ENCODE measurements at regions of chr7 and their contacts with region 1.

Region 1: DNA sequence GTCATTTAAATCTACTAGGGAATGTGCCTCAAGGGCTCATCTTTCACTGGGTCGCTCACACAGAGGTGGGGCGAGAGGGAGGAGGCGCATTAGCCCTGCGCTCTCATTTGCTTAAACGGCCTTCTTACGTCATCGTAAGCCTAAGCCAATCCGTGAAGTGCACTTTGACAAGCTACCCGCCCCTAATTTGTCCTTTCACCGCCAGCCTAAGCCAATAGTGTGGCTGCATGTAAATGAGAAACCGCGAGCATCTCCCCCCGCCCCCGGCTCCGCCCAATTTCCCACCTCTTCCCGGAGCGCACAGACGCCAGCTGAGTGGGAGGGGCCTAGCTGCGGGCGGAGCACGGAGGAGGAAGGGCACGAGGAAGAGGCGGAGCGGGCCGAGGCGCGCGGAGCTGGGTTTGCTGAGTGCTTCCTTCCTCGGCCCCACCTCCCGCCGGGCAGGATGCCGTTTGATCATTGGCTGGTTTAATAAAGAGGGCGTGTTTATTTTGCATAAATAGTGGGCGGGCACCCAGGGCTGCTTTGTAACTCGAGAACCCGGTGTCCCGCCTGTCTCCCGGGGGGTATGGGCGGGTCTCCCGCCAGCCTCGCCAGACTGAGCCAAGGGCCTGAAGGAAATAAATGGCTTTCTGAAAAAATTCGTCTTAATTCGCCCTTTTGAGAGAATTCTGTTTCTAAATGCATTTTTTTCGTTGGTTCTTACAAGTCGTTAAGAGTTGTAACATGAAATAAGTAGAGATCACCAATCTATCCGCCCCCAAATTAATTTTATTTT is 289.5 kb upstream of the NFE2L3 start:
- DNase-seq: peak; percentile 32 to 95 (median 49)
- ATAC-seq: peak; percentile 93
- H3K4me3 ChIP-seq: peak overlapping the region; percentile 4
- H3K4me3 Mint-ChIP-seq: peak overlapping the region in 8 of 10 donors; percentile 38 to 87 (median 61)
- H3K27ac ChIP-seq: no peak overlapping the region
- H3K27ac Mint-ChIP-seq: peak overlapping the region in 8 of 9 donors; percentile 14 to 88 (median 84)
- H3K4me1 ChIP-seq: peaks cover 0 to 6% of the 10 kb centered on the region in 2 donors
- H3K4me1 Mint-ChIP-seq: peaks cover 8 to 46% (median 20%) of the 10 kb centered on the region in 7 donors
- H3K27me3 ChIP-seq: peaks cover 35 to 87% of the 10 kb centered on the region in 2 donors
- H3K27me3 Mint-ChIP-seq: peaks cover 23 to 82% (median 62%) of the 10 kb centered on the region in 5 donors

Region 2: GRCh38 chr7:24836084-24836483 is 1026.4 kb before region 1 on chr7:
- CTCF ChIA-PET with region 1: no interaction called
- POLR2A ChIA-PET with region 1: no interaction called
- intact Hi-C with region 1: no loop called
- DNase-seq: peak in 1 of 9 donors; percentile 4
- ATAC-seq: peak; percentile 59
- H3K4me3 ChIP-seq: no peak overlapping the region
- H3K4me3 Mint-ChIP-seq: peak overlapping the region in 4 of 10 donors; percentile 4 to 62 (median 24)
- H3K27ac ChIP-seq: no peak overlapping the region
- H3K27ac Mint-ChIP-seq: peak overlapping the region in 3 of 9 donors; percentile 16 to 58 (median 41)
- H3K4me1 ChIP-seq: peaks cover 4 to 19% of the 10 kb centered on the region in 2 donors
- H3K4me1 Mint-ChIP-seq: peaks cover 14 to 56% (median 21%) of the 10 kb centered on the region in 7 donors
- H3K27me3 ChIP-seq: no peaks in the 10 kb centered on the region
- H3K27me3 Mint-ChIP-seq: no peaks in the 10 kb centered on the region

Region 3: DNA sequence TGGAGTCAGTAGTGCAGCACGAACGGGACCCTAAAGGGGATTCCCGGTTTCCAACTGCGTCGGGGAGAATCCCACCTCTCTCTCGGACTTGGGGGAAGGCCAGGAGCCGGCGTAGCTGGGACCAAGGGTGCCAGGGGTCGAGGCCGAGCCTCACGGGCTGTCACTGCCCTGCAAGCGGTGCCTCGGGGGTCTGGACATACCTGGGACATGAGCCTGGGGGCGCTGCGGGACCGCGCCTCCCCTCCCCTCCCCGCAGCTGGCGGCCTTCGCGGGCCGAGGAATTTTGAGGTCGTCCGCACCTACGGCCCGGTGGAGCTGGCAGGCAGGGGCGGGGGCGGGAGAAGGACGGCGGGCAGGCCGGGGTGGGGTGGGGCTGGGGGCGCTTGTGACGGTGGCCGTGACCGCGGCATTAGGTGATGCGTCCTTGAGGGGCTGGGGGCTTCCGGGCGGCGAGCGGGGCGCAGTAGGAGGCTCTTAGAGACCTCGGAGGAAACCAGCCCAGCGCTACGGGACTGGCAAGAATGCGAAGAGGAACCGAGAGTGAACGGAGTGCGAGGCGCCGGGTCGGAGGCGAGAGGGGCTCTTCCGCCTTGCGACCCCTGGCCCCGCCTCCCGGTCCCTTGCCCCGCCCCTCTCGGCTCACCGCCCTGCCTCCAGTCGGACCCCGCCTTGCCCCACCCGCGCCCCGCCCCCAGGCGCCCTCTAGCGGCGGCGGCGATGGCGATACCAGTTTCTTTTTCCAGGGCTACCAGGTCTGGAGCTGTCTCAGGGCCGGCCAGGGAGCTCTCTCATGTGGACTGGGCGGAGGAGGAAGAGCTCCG is 682.5 kb before region 1 on chr7:
- CTCF ChIA-PET with region 1: no interaction called
- POLR2A ChIA-PET with region 1: no interaction called
- intact Hi-C with region 1: loop called in 1 of 2 experiments (anchors 5 kb)
- DNase-seq: peak; percentile 88 to 99 (median 94)
- ATAC-seq: peak; percentile 99
- H3K4me3 ChIP-seq: peak overlapping the region; percentile 75
- H3K4me3 Mint-ChIP-seq: peak overlapping the region; percentile 82 to 93 (median 88)
- H3K27ac ChIP-seq: peak overlapping the region; percentile 86
- H3K27ac Mint-ChIP-seq: peak overlapping the region; percentile 83 to 96 (median 92)
- H3K4me1 ChIP-seq: peaks cover 6 to 7% of the 10 kb centered on the region in 2 donors
- H3K4me1 Mint-ChIP-seq: peaks cover 13 to 31% (median 22%) of the 10 kb centered on the region in 7 donors
- H3K27me3 ChIP-seq: no peaks in the 10 kb centered on the region
- H3K27me3 Mint-ChIP-seq: peaks cover 0 to 12% (median 0%) of the 10 kb centered on the region in 5 donors

Region 4: DNA sequence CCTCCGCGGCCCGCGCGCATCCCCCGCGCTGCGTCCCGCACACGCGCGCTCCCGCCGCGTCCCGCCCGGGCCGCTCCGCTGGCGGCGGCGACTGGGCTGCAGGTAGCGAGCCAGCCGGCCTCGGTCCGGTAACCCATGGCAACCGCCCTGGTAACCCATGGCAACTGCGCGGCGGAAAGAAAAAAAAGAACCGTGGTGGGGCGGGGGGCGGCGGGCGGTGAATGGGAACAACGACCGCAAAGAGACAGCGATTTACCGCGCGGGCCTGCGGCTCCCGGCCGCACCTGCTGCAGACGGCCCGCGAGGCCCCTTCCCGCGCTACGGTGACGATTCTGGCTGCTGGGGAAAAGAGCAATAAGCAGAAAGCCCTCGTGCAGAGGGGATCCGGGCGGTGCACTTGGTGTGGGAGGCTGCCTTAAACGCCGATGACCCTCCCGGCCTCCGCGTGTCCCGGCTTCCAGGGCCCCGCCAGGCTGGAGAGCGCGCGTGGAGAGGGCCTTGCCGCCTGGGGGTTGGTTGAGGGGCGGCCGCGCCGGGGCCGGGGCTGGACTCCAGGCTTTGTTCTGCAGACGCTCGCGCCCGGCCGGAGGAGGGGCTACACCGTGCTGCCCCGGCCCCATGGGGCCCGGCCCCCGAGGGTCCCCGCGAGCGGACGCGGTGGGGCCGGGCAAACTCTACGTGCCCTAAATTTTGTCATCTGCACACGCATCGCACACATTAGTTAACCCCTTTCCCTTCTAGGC is 513.9 kb after region 1 on chr7:
- CTCF ChIA-PET with region 1: no interaction called
- POLR2A ChIA-PET with region 1: no interaction called
- intact Hi-C with region 1: loop called in 1 of 2 experiments (anchors 1 kb)
- DNase-seq: peak in 7 of 9 donors; percentile 13 to 56 (median 20)
- ATAC-seq: peak; percentile 51
- H3K4me3 ChIP-seq: peak overlapping the region; percentile 54
- H3K4me3 Mint-ChIP-seq: peak overlapping the region; percentile 83 to 95 (median 85)
- H3K27ac ChIP-seq: no peak overlapping the region
- H3K27ac Mint-ChIP-seq: peak overlapping the region in 1 of 9 donors; percentile 65
- H3K4me1 ChIP-seq: peaks cover 4 to 6% of the 10 kb centered on the region in 2 donors
- H3K4me1 Mint-ChIP-seq: peaks cover 0 to 8% (median 4%) of the 10 kb centered on the region in 7 donors
- H3K27me3 ChIP-seq: peaks cover 4 to 24% of the 10 kb centered on the region in 2 donors
- H3K27me3 Mint-ChIP-seq: peaks cover 28 to 62% (median 37%) of the 10 kb centered on the region in 5 donors

Region 5: GRCh38 chr7:27095897-27096767 is 1233.7 kb after region 1 on chr7 and contains the start of gene HOXA1:
- CTCF ChIA-PET with region 1: no interaction called
- POLR2A ChIA-PET with region 1: no interaction called
- intact Hi-C with region 1: loop called in 1 of 2 experiments (anchors 2 kb)
- DNase-seq: peak; percentile 44 to 72 (median 63)
- ATAC-seq: peak; percentile 90
- H3K4me3 ChIP-seq: peak within 1 kb of the TSS; percentile 76
- H3K4me3 Mint-ChIP-seq: peak within 1 kb of the TSS; percentile 79 to 94 (median 88)
- H3K27ac ChIP-seq: peak within 1 kb of the TSS; percentile 57
- H3K27ac Mint-ChIP-seq: peak within 1 kb of the TSS in 4 of 9 donors; percentile 33 to 77 (median 66)
- H3K4me1 ChIP-seq: peaks cover 9 to 21% of the 10 kb centered on the region in 2 donors
- H3K4me1 Mint-ChIP-seq: peaks cover 9 to 36% (median 30%) of the 10 kb centered on the region in 7 donors
- H3K27me3 ChIP-seq: peaks cover 3 to 9% of the 10 kb centered on the region in 2 donors
- H3K27me3 Mint-ChIP-seq: peaks cover 85 to 94% (median 87%) of the 10 kb centered on the region in 5 donors
- total RNA-seq, gene HOXA1: 0.10 to 1.1 (median 0.41) TPM in 4 of 5 experiments, not detected in the other

Region 6: DNA sequence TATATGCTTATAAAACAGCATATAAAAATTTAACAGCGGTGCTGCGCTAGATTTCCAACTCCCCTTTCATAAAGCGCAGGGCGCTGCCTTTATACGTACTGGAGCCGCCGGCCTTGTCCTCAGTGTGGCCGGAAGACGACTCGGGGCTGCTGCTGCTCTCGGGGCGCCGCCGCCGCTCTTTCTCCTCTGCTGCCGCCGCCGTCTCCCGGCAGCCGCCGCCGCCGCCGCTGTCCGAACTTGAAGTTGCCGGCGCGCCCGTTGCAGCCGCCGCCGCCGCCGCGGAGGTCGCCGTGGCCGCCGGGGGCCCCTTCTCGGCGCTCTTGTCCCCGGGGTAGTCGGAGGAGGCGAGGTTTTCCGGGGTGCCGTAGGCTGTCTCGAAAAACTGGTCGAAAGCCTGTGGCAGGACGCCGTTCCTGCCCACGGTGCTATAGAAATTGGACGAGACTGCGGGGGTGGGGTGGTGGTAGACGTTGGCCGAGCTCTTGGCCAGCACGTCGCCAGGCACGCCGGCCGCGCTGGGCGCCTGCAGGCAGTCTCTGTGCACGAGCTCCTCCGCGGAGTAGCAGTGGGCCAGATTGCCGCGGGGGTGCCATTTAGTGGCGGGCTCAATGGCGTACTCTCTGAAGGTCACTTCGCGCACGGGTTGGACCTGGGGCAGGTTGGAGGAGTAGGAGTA is 1322.0 kb after region 1 on chr7:
- CTCF ChIA-PET with region 1: no interaction called
- POLR2A ChIA-PET with region 1: no interaction called
- intact Hi-C with region 1: loop called in 1 of 2 experiments (anchors 5 kb)
- DNase-seq: peak in 2 of 9 donors; percentile 36 to 38
- ATAC-seq: peak; percentile 22
- H3K4me3 ChIP-seq: peak overlapping the region; percentile 39
- H3K4me3 Mint-ChIP-seq: peak overlapping the region; percentile 69 to 87 (median 79)
- H3K27ac ChIP-seq: no peak overlapping the region
- H3K27ac Mint-ChIP-seq: peak overlapping the region in 7 of 9 donors; percentile 43 to 84 (median 73)
- H3K4me1 ChIP-seq: peaks cover 40 to 52% of the 10 kb centered on the region in 2 donors
- H3K4me1 Mint-ChIP-seq: peaks cover 29 to 62% (median 51%) of the 10 kb centered on the region in 7 donors
- H3K27me3 ChIP-seq: peaks cover 47 to 89% of the 10 kb centered on the region in 2 donors
- H3K27me3 Mint-ChIP-seq: peaks cover 78 to 92% (median 81%) of the 10 kb centered on the region in 5 donors

Measured in naive thymus-derived CD4-positive, alpha-beta T cell (primary cell).